ENCODE measurements at regions of chr6 and their contacts with region 1.

Region 1: GRCh38 chr6:31068669-31069340 is 43.6 kb downstream of the C6orf15 start:
- DNase-seq: peak; percentile 56 to 77 (median 74)
- ATAC-seq: peak; percentile 89 to 99 (median 95)
- H3K4me3 ChIP-seq: no peak overlapping the region
- H3K27ac ChIP-seq: no peak overlapping the region
- H3K4me1 ChIP-seq: peaks cover 0 to 6% (median 0%) of the 10 kb centered on the region in 4 donors
- H3K27me3 ChIP-seq: no peaks in the 10 kb centered on the region
- CTCF ChIP-seq: peak; percentile 64 to 90 (median 88)
- POLR2A ChIP-seq: no peak

Region 2: DNA sequence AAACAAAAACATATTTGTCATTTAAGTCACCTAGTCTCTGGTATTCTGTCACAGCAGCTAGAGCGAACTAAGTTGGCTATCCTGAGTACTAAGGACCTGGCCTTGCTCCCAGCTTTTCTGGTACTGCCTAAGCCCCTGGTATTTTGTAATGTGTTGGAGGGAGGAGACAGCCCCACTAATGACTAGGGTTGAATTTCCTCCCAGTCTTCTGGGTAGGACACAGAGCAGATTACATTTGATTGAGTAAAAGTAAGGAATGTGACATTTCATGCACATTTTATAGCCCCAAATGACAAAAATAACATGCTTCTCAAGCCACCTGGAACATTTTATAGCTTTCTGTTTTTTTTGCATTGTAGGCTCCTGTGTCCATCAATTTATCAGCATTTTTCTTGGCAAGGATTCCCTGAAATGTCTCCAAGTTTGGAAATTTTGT is 232.4 kb before region 1 on chr6:
- intact Hi-C with region 1: loop called in 1 of 2 experiments (anchors 10 kb)
- DNase-seq: no peak
- ATAC-seq: no peak
- H3K4me3 ChIP-seq: no peak overlapping the region
- H3K27ac ChIP-seq: no peak overlapping the region
- H3K4me1 ChIP-seq: no peaks in the 10 kb centered on the region
- H3K27me3 ChIP-seq: no peaks in the 10 kb centered on the region
- CTCF ChIP-seq: no peak
- POLR2A ChIP-seq: no peak

Measured in right lobe of liver (tissue), 6 donors.